ENCODE measurements at regions of chr18 and their contacts with region 1.

Region 1: GRCh38 chr18:3281456-3282400 is 19.8 kb downstream of the MYL12B start:
- DNase-seq: no peak
- ATAC-seq: peak; percentile 69 to 86 (median 74)
- H3K4me3 ChIP-seq: no peak overlapping the region
- H3K27ac ChIP-seq: no peak overlapping the region
- H3K4me1 ChIP-seq: peaks cover 9% of the 10 kb centered on the region
- H3K27me3 ChIP-seq: no peaks in the 10 kb centered on the region
- CTCF ChIP-seq: peak; percentile 75

Region 2: DNA sequence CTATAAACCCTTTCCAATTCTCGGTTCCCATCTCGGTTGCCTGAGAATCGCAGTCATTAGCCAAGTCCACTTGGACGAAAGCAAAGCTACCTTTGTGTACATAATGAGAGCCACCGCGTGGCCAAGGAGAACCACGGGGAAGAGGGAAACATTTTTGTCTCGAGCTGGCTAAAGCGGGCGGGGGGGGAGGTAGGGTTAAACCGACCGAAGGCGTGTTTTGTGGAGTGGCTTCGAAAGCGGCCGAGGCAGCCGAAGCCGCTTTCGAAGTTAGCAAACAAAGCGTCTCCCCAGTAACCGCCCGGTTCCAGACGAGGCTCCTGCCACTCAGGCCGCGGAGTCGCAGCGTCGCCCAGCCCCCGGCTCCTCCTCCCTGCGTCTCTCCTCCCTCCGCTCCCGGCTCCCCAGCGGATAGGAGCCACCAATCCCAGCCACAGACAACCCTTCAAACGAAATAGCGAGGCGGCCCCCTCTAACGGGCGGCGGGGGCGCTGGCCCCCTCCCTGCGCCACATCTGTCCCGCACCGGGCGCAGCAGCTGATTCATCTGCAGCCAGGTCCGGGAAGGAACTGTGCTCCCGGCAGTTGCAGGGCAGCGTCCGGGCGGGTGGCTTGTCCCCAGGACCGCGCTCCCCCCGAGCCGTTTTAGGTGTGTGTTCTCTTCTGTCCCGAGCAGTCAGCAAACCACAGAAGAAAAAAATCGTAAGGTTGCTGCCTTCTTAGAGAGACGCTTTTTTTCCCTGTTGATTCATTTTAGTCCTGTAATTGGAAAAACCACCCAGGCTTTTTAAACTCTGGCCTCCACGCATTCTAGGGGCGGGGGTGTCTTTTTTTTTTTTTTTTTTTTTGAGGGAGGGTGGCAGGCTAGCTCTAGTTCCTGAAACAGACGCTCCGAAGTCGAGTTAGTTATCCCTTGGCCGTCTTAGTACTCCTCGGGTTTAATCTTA is 166.4 kb after region 1 on chr18:
- intact Hi-C with region 1: loop called in 1 of 2 experiments (anchors 2 kb)
- DNase-seq: peak; percentile 94 to 97
- ATAC-seq: peak; percentile 67 to 74 (median 71)
- H3K4me3 ChIP-seq: peak overlapping the region; percentile 97
- H3K27ac ChIP-seq: peak overlapping the region; percentile 100
- H3K4me1 ChIP-seq: peaks cover 10% of the 10 kb centered on the region
- H3K27me3 ChIP-seq: no peaks in the 10 kb centered on the region
- CTCF ChIP-seq: peak; percentile 10

Region 3: GRCh38 chr18:3454365-3455089 is 172.8 kb after region 1 on chr18:
- intact Hi-C with region 1: loop called (anchors 2 kb)
- DNase-seq: no peak
- ATAC-seq: no peak
- H3K4me3 ChIP-seq: peak overlapping the region; percentile 97
- H3K27ac ChIP-seq: peak overlapping the region; percentile 100
- H3K4me1 ChIP-seq: peaks cover 32% of the 10 kb centered on the region
- H3K27me3 ChIP-seq: no peaks in the 10 kb centered on the region
- CTCF ChIP-seq: peak; percentile 68

Region 4: GRCh38 chr18:3585656-3586509 is 304.2 kb after region 1 on chr18:
- intact Hi-C with region 1: loop called (anchors 2 kb)
- DNase-seq: peak; percentile 80 to 86
- ATAC-seq: peak; percentile 84 to 96 (median 94)
- H3K4me3 ChIP-seq: no peak overlapping the region
- H3K27ac ChIP-seq: no peak overlapping the region
- H3K4me1 ChIP-seq: no peaks in the 10 kb centered on the region
- H3K27me3 ChIP-seq: no peaks in the 10 kb centered on the region
- CTCF ChIP-seq: peak; percentile 68